A549 (cell line): ENCODE measurements at regions of chr10 and their contacts with region 1.

Region 1: DNA sequence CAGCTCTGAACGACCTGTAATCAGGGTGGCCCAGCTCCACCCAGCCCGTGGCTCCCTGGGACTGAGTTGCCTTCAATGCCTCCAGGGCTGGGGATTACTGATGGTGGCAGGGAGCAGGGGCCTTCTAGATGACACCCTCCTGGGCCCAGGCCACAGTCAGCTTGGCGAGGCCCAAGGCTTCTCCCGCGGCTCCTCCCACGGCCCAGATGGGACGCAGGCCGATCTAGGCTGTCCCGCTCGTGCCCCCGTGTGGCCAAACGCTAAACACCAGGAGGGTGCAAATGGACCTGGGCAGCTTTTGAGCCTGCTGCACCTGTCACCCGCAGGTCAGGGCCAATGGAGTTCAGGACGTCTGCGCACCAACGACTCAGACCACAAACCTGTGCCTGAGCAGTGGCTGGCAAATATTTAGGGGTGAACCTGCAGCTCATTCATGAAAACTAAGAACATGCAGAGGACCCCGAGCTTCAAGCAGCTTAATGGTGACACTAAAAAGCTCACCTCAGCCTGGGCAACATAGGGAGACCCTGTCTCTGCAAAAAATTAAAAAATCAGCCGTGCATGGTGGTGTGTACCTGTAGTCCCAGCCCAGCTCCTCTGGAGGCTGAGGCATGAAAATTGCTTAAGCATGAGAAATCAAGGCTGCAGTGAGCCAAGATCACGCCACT is 43.2 kb downstream of the ASB13 start:
- DNase-seq: peak; percentile 75 to 88
- ATAC-seq: peak; percentile 93 to 98
- H3K4me3 ChIP-seq: no peak overlapping the region
- H3K27ac ChIP-seq: peak overlapping the region; percentile 78 to 91
- H3K4me1 ChIP-seq: peaks cover 14% of the 10 kb centered on the region
- CTCF ChIP-seq: peak; percentile 86
- EP300 ChIP-seq: no peak
- POLR2A ChIP-seq: no peak
- RAD21 ChIP-seq: peak; percentile 99

Region 2: DNA sequence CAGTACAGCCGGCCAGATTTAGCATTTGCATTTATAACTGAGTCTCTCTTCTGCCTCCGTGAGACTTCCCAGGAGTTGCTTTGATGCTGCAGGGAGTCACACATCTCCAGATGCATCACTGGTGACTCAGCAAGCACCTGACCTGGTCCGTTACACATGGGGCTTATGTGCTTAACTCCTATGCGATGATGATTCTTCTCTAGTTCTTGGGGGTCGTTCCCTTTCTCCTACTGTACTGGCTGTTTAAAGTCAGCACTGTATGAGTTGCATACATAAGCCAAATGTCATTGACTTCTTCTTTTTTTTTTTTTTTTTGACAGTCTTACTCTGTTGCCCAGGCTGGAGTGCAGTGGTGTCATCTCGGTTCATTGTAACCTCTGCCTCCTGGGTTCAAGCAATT is 810.2 kb before region 1 on chr10:
- CTCF ChIA-PET with region 1: interaction called, 23 read pairs
- POLR2A ChIA-PET with region 1: no interaction called
- DNase-seq: peak; percentile 85 to 91
- ATAC-seq: peak; percentile 85 to 95
- H3K4me3 ChIP-seq: no peak overlapping the region
- H3K27ac ChIP-seq: peak overlapping the region; percentile 79 to 83
- H3K4me1 ChIP-seq: peaks cover 54% of the 10 kb centered on the region
- CTCF ChIP-seq: no peak
- EP300 ChIP-seq: peak in 1 of 2 experiments; percentile 55; a peak in 2 of 5 replicates
- POLR2A ChIP-seq: no peak
- RAD21 ChIP-seq: peak in 1 of 2 experiments; percentile 16; a peak in 1 of 5 replicates

Region 3: DNA sequence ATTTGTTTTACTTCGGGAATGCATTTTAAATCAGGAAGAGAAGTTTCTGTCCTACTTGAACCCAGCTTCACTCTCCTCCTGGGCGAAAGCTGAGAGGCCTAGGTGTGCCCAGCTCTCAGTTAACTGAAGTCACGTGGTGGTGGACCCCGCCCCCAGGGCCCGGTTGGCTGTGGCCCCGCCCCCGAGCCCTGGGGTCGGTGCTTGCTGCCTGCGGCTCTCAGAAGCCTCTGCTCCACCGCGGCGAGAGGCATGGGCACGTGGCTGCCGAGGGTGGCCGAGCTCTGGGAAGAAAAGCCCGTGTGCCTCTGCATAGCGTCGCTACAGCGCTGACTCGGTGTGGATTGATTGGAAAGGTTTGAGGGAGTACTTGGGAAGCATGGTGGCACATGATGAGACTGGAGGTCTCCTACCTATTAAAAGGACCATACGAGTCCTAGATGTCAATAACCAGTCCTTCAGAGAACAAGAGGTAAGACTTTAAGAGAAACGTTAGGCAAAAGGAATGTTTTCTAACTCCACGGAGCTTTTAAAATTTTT is 176.8 kb before region 1 on chr10:
- CTCF ChIA-PET with region 1: interaction called, 432 read pairs
- POLR2A ChIA-PET with region 1: interaction called, 34 read pairs
- DNase-seq: peak; percentile 76 to 89
- ATAC-seq: peak; percentile 95 to 96
- H3K4me3 ChIP-seq: peak overlapping the region; percentile 61
- H3K27ac ChIP-seq: peak overlapping the region; percentile 73 to 84
- H3K4me1 ChIP-seq: peaks cover 35% of the 10 kb centered on the region
- CTCF ChIP-seq: no peak
- EP300 ChIP-seq: no peak
- POLR2A ChIP-seq: peak; percentile 99
- RAD21 ChIP-seq: peak; percentile 31 to 40; a peak in 2 of 5 replicates

Region 4: GRCh38 chr10:5466418-5467154 is 156.6 kb before region 1 on chr10:
- CTCF ChIA-PET with region 1: interaction called, 33 read pairs
- POLR2A ChIA-PET with region 1: no interaction called
- DNase-seq: no peak
- ATAC-seq: peak; percentile 12 to 53; a peak in 3 of 6 replicates
- H3K4me3 ChIP-seq: no peak overlapping the region
- H3K27ac ChIP-seq: peak overlapping the region in 1 of 2 experiments; percentile 34; a peak in 3 of 6 replicates
- H3K4me1 ChIP-seq: peaks cover 6% of the 10 kb centered on the region; the same call in 1 of the 3 replicates
- CTCF ChIP-seq: no peak
- EP300 ChIP-seq: no peak
- POLR2A ChIP-seq: no peak
- RAD21 ChIP-seq: no peak

Region 5: GRCh38 chr10:5525561-5526341 is 97.5 kb before region 1 on chr10:
- CTCF ChIA-PET with region 1: interaction called, 28 read pairs
- POLR2A ChIA-PET with region 1: no interaction called
- DNase-seq: no peak
- ATAC-seq: no peak
- H3K4me3 ChIP-seq: no peak overlapping the region
- H3K27ac ChIP-seq: no peak overlapping the region
- H3K4me1 ChIP-seq: no peaks in the 10 kb centered on the region
- CTCF ChIP-seq: no peak
- EP300 ChIP-seq: no peak
- POLR2A ChIP-seq: no peak
- RAD21 ChIP-seq: no peak

Region 6: GRCh38 chr10:5583525-5584175 is 39.6 kb before region 1 on chr10:
- CTCF ChIA-PET with region 1: interaction called, 36 read pairs
- POLR2A ChIA-PET with region 1: no interaction called
- DNase-seq: no peak
- ATAC-seq: no peak
- H3K4me3 ChIP-seq: no peak overlapping the region
- H3K27ac ChIP-seq: peak overlapping the region; percentile 76 to 77; a peak in 4 of 6 replicates
- H3K4me1 ChIP-seq: peaks cover 36% of the 10 kb centered on the region
- CTCF ChIP-seq: no peak
- EP300 ChIP-seq: no peak
- POLR2A ChIP-seq: no peak
- RAD21 ChIP-seq: no peak

Region 7: DNA sequence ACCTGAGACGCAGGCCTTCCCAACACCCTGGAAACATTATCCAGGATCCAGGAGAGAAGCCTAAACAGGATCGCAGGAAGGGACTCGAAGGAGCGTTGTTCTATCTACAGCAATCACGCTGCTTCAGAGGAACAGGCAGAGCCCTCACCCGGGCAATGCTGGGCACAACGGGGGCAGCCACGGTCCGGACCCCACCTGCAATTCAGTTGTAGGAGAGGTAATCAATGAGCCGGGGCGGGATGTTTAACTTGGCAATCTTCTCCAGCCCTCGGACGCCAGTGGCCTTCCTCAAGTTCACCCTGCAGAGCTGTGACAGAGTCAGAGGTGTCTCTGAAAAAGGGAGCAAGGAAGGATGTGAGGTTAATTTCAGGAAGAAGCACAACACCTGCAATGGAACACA is 17.3 kb after region 1 on chr10:
- CTCF ChIA-PET with region 1: interaction called, 38 read pairs
- POLR2A ChIA-PET with region 1: no interaction called
- DNase-seq: no peak
- ATAC-seq: no peak
- H3K4me3 ChIP-seq: no peak overlapping the region
- H3K27ac ChIP-seq: no peak overlapping the region
- H3K4me1 ChIP-seq: no peaks in the 10 kb centered on the region
- CTCF ChIP-seq: no peak
- EP300 ChIP-seq: no peak
- POLR2A ChIP-seq: no peak
- RAD21 ChIP-seq: no peak

Region 8: DNA sequence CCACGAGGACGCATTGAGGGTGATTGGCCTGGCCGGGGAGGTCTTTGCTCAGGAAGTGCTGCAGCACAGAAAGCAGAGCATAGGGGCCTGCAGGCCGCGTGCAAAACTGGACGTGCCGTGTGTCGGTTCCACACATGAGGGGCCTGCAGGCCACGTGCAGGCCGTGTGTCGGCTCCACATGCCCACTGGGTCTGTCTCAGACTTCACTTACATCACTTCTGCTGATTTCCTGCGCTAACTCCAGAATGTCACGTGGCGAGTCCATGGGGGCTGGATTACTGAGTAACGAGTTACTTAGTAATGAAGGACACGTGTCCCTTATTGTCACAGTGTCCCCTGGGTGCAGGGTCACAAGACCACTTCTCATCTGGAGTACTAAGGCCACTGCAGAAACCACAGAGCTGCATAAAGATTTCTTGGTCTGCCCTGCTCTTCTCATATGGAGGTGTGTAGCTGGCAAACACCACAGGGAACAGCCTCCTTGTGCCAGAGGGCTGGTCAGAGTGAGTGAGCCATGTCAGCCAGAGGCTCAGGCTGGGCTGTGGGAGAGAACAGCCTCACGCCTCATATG is 129.2 kb after region 1 on chr10:
- CTCF ChIA-PET with region 1: no interaction called
- POLR2A ChIA-PET with region 1: no interaction called
- DNase-seq: no peak
- ATAC-seq: peak in 1 of 2 experiments; percentile 31; a peak in 3 of 6 replicates
- H3K4me3 ChIP-seq: no peak overlapping the region
- H3K27ac ChIP-seq: no peak overlapping the region
- H3K4me1 ChIP-seq: no peaks in the 10 kb centered on the region
- CTCF ChIP-seq: no peak
- EP300 ChIP-seq: no peak
- POLR2A ChIP-seq: no peak
- RAD21 ChIP-seq: no peak

Region 9: DNA sequence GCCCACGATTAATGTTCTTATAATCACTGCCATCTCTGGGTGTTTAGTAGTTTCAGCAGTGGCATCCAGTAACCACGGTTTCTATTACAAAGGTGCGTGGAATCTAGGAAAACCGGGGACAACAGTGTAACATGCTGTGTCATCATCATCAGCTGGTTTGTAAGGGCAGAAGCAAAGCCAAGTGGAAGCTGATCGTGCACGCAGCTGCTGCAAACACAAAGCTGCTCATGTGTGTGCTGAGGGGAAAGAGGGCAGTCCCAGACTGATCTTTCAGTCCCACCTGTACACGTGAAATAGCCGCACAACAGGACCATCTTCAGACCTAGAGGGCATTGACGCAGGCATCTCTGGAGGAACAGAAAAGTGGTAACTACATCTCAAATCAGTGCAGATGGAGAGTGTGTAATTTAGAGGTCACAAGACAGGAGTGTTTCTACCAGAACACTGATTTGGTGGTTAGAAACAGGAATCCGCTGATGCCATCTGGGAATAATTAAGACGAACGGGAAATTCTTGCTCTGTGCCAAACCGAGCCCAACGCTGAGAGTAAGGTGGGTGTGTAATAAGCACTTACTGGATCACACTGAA is 253.1 kb after region 1 on chr10:
- CTCF ChIA-PET with region 1: no interaction called
- POLR2A ChIA-PET with region 1: no interaction called
- DNase-seq: no peak
- ATAC-seq: no peak
- H3K4me3 ChIP-seq: no peak overlapping the region
- H3K27ac ChIP-seq: no peak overlapping the region
- H3K4me1 ChIP-seq: no peaks in the 10 kb centered on the region
- CTCF ChIP-seq: no peak
- EP300 ChIP-seq: no peak
- POLR2A ChIP-seq: no peak
- RAD21 ChIP-seq: no peak